ENCODE measurements at regions of chr7 and their contacts with region 1.

Region 1: GRCh38 chr7:28478656-28479055 is 66.3 kb downstream of the CREB5 start:
- H3K4me3 ChIP-seq: no peak overlapping the region
- H3K27ac ChIP-seq: no peak overlapping the region
- H3K4me1 ChIP-seq: peaks cover 39% of the 10 kb centered on the region
- CTCF ChIP-seq: no peak

Region 2: DNA sequence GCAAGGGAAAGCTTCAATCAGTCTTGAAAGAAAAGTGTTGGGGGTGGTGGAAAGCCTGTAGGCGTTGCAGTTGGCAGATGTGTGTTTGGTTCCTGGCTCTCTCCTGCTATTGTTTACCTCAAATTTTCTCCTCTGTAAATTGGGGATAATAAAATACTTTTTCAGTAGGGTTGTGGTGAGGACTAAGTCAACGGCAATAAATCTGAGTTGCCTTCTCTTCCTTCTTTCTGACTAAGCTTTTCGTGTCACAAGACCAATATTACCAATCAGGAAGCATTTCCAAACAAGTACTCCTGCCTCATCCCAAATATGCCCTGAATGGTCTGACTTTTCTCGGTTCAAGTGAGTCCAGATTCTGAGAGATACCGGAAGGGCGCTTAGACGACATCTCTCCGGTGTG is 12.3 kb before region 1 on chr7:
- CTCF ChIA-PET with region 1: interaction called, 10 read pairs
- POLR2A ChIA-PET with region 1: no interaction called
- H3K4me3 ChIP-seq: no peak overlapping the region
- H3K27ac ChIP-seq: no peak overlapping the region
- H3K4me1 ChIP-seq: peaks cover 4% of the 10 kb centered on the region
- CTCF ChIP-seq: no peak

Region 3: DNA sequence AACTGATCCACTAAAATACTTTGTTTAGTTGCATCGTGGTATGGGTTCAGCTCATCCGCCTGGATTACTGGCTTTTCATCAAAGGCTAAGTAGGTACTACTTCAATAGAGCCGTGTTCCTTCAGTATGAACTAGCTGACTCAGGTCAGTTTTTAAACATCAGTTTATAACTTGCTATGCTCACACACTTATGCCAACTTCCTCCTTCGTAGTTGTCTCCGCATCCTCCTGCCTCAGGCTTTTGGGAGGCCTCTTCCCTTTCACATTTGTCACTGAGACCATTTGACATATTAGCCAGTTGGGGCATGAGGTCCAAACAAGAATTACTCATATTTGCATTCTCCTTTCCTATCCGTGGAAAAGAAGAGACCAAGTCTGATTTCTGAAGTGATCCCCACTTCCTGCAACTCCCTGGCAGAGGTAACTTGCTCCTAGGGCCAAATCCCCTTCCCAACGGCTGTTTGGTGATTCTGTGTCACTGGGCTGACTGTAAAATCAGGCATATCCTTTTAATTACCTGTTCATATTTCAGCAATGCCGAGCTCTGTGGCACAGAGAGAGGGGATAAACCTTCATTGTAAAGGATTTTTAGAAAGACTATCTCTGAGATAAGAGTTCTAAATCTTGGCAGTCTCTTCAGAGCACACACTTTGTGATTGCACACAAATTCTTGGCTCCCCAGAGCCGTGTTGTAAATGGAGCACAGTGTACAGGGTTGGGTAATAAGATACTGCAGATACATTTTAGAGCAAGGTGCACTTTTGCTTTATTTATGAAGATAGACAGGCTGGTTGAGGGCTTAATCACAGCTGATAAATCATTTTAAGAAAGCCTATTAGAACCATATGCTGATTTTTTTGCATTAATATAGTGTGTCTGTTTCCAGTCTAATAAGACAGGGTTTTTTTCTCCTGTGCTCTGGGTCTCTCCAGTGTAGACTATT is 41.7 kb after region 1 on chr7:
- CTCF ChIA-PET with region 1: no interaction called
- POLR2A ChIA-PET with region 1: no interaction called
- H3K4me3 ChIP-seq: no peak overlapping the region
- H3K27ac ChIP-seq: peak overlapping the region; percentile 28; the same call in 1 of the 2 replicates
- H3K4me1 ChIP-seq: peaks cover 12% of the 10 kb centered on the region
- CTCF ChIP-seq: no peak

Measured in HEK293 (cell line).